ENCODE measurements at regions of chr4 and their contacts with region 1.

Region 1: DNA sequence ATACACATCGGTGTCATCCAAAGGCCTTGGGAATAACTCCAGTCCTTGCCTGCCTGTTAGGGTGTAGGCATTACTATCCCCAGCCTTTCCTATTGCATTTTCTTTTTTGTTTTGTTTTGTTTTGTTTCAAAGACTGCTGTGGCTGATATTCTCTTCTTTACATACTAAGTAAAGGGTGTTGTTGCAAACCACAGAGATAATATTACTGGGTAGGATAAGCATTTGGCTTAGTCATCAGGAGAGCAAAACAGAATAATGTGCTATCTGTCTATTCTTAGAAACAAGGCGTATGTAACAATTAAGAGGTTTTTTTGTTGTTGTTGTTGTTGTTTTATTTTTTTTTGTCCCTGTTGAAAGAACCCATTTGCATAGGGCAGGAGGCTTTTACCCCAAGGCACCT is 41.8 kb downstream of the UGT2B28 start:
- DNase-seq: no peak
- ATAC-seq: no peak
- H3K4me3 ChIP-seq: no peak overlapping the region
- H3K27ac ChIP-seq: no peak overlapping the region
- H3K4me1 ChIP-seq: no peaks in the 10 kb centered on the region
- H3K27me3 ChIP-seq: no peaks in the 10 kb centered on the region
- CTCF ChIP-seq: no peak
- EP300 ChIP-seq: no peak
- POLR2A ChIP-seq: no peak
- RAD21 ChIP-seq: no peak

Region 2: DNA sequence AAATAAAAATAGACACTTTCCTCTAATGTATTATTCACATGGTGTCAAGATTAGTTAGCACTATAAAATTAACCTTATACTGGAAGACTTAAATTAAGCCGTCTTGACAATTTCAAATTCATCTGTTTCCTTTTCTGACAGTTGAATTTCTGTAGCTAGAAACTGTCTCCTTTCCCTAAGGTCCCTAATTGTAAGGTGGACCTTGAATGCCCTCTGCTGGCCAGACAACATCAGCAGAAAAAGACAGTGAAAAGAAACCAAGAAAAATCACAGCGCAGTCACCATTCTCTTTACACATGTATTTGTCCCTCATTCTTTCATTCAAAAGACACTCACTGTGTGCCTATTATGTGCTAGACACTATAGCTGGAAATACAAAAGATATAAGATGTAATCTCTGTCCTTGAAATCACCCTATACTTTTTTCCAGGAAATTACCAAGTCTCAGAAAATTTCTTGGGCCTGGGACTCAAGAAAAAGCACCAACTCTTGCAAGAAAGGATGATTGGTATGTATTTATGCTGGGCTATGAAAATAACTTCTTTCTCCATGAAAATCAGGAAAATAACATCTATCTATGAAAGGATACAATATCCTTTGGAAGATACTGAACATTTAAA is 1237.3 kb after region 1 on chr4:
- CTCF ChIA-PET with region 1: interaction called, 4 read pairs
- POLR2A ChIA-PET with region 1: no interaction called
- in situ Hi-C with region 1: no loop called
- intact Hi-C with region 1: loop called (anchors 5 kb)
- DNase-seq: peak; percentile 67
- ATAC-seq: peak; percentile 74; the same call in 2 of the 3 replicates
- H3K4me3 ChIP-seq: no peak overlapping the region
- H3K27ac ChIP-seq: no peak overlapping the region
- H3K4me1 ChIP-seq: peaks cover 28% of the 10 kb centered on the region
- H3K27me3 ChIP-seq: no peaks in the 10 kb centered on the region
- CTCF ChIP-seq: peak; percentile 81
- EP300 ChIP-seq: no peak
- POLR2A ChIP-seq: no peak
- RAD21 ChIP-seq: peak; percentile 34; the same call in 1 of the 2 replicates

Measured in HepG2 (cell line).